ENCODE measurements at regions of chr1 and their contacts with region 1.

Region 1: DNA sequence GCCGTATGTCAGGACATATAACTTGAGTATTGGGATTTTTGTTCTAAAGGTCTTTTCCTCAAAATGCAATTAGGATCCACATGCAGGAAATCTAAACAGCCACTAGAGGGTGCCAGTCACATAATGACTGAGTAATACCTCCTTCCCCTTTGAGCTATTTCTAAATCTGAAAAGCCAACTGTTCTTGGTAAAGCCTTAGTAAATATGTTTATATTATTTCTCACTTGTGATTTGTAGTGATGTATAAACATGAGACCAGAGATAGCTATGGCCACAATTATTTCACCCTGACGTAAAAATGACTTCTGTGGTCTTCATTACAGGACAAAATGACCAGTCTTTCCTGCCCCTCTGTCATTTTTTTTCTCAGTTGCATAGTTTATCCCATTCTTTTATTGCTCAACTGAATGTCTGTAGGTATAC is 41.0 kb upstream of the DR1 start:
- DNase-seq: peak; percentile 45
- CTCF ChIP-seq: peak; percentile 82

Region 2: GRCh38 chr1:93078986-93079654 is 225.6 kb before region 1 on chr1 and contains the start of gene MTF2:
- CTCF ChIA-PET with region 1: interaction called, 10 read pairs
- POLR2A ChIA-PET with region 1: no interaction called
- DNase-seq: peak; percentile 91
- CTCF ChIP-seq: no peak

Region 3: DNA sequence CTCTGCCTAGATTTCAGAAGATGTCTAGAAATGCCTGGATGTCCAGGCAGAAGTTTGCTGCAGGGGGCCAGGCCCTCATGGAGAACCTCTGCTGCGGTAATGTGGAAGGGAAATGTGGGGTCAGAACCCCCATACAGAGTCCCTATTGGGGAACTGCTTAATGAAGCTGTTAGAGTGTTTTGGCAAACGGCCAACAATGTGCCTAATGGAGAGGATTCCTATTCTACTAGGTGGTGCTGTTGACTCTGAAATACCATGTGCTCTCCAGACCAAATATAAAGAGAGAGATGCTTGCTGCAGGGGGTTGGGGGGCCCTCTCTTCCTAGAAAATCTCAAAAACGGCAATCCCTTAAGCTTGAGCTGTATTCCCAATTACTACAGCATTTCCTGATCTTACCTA is 16.2 kb before region 1 on chr1:
- CTCF ChIA-PET with region 1: interaction called, 15 read pairs
- POLR2A ChIA-PET with region 1: no interaction called
- DNase-seq: no peak
- CTCF ChIP-seq: no peak

Region 4: DNA sequence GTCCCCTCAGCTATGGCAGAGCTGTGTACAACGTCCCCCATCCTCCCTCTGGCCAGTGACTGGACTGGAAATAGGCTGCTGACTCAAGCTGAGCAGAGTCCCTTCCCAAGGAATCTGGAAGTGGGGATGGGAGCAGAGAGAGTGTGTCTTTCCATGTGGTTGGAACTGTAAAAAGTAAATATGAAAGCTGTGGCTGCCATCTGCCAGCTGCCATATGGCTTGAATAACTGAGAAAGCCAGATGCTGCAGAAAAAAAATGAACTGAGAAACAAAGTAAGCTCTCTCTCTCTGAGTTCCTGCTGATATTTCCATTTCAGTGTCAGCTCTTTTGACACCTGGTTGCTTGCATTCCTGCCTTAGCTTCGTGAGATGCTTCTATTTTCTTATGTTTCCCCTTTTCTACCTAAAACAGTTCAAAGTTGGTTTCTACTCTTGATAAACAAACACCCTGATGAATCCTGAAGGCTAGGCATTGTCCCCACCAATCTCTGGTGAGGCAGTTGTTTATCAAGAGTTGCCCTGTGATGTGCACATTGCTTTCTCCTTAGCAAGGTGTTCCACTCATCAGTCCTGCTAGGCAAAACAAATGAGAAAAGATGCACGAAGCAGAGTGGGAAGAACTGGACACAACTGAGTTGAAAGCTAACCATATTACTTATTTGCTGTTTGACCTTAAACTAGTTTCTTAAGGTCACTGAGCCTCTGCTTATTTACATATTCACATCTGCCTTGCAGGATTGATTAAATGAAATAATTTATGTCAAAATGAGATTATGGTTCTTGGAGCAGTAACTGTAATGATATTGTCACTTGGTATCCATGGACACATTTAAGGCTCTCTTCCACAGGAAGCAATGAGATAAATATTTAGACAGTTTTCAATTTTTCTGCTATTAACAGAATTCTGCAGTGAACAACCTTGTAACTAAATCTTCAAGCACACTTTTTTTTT is 24.4 kb after region 1 on chr1:
- CTCF ChIA-PET with region 1: interaction called, 25 read pairs
- POLR2A ChIA-PET with region 1: interaction called, 3 read pairs
- DNase-seq: peak; percentile 18
- CTCF ChIP-seq: no peak

Region 5: GRCh38 chr1:93345633-93346420 is 41.1 kb after region 1 on chr1 and contains the start of gene DR1:
- CTCF ChIA-PET with region 1: interaction called, 14 read pairs
- POLR2A ChIA-PET with region 1: no interaction called
- DNase-seq: peak; percentile 95
- CTCF ChIP-seq: no peak

Region 6: DNA sequence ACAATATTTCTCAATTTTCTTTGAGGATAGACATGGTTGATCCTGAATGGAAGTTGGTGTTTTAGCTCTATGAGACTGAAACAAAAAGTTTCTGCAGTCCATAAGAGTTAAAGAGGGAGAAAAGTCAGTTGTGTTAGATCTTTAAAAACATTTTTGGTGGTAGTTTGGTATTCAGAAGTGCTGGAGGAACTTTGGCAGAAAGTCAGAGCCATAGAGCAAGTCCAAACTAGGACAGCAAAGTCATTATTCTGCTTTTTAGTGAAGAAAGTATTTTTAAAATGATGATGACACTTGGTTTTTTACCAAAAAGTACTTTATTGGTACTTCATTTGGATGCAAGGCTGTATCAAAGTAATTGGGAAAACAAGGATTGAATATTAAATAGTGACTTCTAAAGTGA is 185.0 kb after region 1 on chr1:
- CTCF ChIA-PET with region 1: no interaction called
- POLR2A ChIA-PET with region 1: no interaction called
- DNase-seq: no peak
- CTCF ChIP-seq: no peak

Region 7: GRCh38 chr1:93579891-93580290 is 275.2 kb after region 1 on chr1:
- CTCF ChIA-PET with region 1: no interaction called
- POLR2A ChIA-PET with region 1: no interaction called
- DNase-seq: no peak
- CTCF ChIP-seq: no peak

Measured in GM10248 (cell line).